Heart left ventricle (tissue), 16 donors: ENCODE measurements at regions of chr13 and their contacts with region 1.

Region 1: DNA sequence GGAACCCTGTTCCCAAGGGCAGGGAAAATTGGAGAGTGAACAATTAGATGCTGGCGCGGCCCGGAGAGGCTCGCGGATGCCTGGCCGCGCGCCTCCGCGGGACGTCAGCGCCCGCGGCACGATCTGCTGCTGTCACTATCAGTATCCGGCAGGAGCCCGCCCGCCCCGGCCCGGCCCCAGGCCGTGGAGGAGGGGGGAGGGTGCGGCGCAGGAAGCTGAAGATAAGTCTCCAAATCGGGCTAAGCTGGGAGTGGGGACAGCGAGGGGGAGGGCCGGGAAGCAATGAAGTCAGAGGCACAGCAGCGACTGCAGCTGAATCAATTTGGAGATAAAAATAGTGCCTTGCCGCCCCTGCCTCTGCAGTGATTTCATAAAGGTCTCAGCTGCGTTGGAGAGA is 441.5 kb upstream of the KLF12 start:
- DNase-seq: peak; percentile 90 to 94 (median 92)
- ATAC-seq: peak; percentile 96 to 99 (median 99)
- H3K4me3 ChIP-seq: peak overlapping the region in 11 of 12 donors; percentile 31 to 51 (median 45)
- H3K27ac ChIP-seq: peak overlapping the region in 9 of 12 donors; percentile 6 to 86 (median 73)
- H3K4me1 ChIP-seq: peaks cover 4 to 29% (median 17%) of the 10 kb centered on the region in 12 donors
- H3K27me3 ChIP-seq: no peaks in the 10 kb centered on the region
- CTCF ChIP-seq: no peak
- POLR2A ChIP-seq: peak in 1 of 2 donors; percentile 7

Region 2: GRCh38 chr13:74683411-74683810 is 107.7 kb after region 1 on chr13:
- intact Hi-C with region 1: no loop called
- DNase-seq: no peak
- ATAC-seq: no peak
- H3K4me3 ChIP-seq: no peak overlapping the region
- H3K27ac ChIP-seq: no peak overlapping the region
- H3K4me1 ChIP-seq: peaks cover 0 to 10% (median 0%) of the 10 kb centered on the region in 12 donors
- H3K27me3 ChIP-seq: no peaks in the 10 kb centered on the region
- CTCF ChIP-seq: no peak
- POLR2A ChIP-seq: no peak

Region 3: GRCh38 chr13:74732736-74733385 is 157.1 kb after region 1 on chr13:
- intact Hi-C with region 1: loop called in 1 of 10 experiments (anchors 5 kb)
- DNase-seq: no peak
- ATAC-seq: no peak
- H3K4me3 ChIP-seq: no peak overlapping the region
- H3K27ac ChIP-seq: no peak overlapping the region
- H3K4me1 ChIP-seq: peaks cover 0 to 5% (median 0%) of the 10 kb centered on the region in 12 donors
- H3K27me3 ChIP-seq: no peaks in the 10 kb centered on the region
- CTCF ChIP-seq: no peak
- POLR2A ChIP-seq: no peak